Activated B cell treated with CpG ODN at 0.5 μM for 24 hours (primary cell): ENCODE measurements at regions of chr6 and their contacts with region 1.

Region 1: GRCh38 chr6:90274451-90275030 is 22.1 kb downstream of the BACH2 start:
- DNase-seq: peak; percentile 43
- ATAC-seq: peak; percentile 84
- H3K4me3 Mint-ChIP-seq: peak overlapping the region; percentile 64
- H3K27ac Mint-ChIP-seq: peak overlapping the region; percentile 85
- H3K4me1 Mint-ChIP-seq: peaks cover 93% of the 10 kb centered on the region
- H3K27me3 Mint-ChIP-seq: no peaks in the 10 kb centered on the region
- CTCF ChIP-seq: no peak

Region 2: GRCh38 chr6:89829591-89830385 is 444.8 kb before region 1 on chr6 and contains the start of gene CASP8AP2:
- CTCF ChIA-PET with region 1: no interaction called
- POLR2A ChIA-PET with region 1: no interaction called
- intact Hi-C with region 1: no loop called
- DNase-seq: peak; percentile 76
- ATAC-seq: peak; percentile 93
- H3K4me3 Mint-ChIP-seq: peak within 1 kb of the TSS; percentile 99
- H3K27ac Mint-ChIP-seq: peak within 1 kb of the TSS; percentile 96
- H3K4me1 Mint-ChIP-seq: peaks cover 37% of the 10 kb centered on the region
- H3K27me3 Mint-ChIP-seq: no peaks in the 10 kb centered on the region
- CTCF ChIP-seq: no peak
- total RNA-seq, gene CASP8AP2: 17.1 and 17.8 TPM in 2 replicates

Region 3: GRCh38 chr6:89970609-89971337 is 303.8 kb before region 1 on chr6:
- CTCF ChIA-PET with region 1: no interaction called
- POLR2A ChIA-PET with region 1: no interaction called
- intact Hi-C with region 1: loop called (anchors 5 kb)
- DNase-seq: no peak
- ATAC-seq: peak; percentile 61
- H3K4me3 Mint-ChIP-seq: no peak overlapping the region
- H3K27ac Mint-ChIP-seq: no peak overlapping the region
- H3K4me1 Mint-ChIP-seq: peaks cover 12% of the 10 kb centered on the region
- H3K27me3 Mint-ChIP-seq: no peaks in the 10 kb centered on the region
- CTCF ChIP-seq: no peak

Region 4: DNA sequence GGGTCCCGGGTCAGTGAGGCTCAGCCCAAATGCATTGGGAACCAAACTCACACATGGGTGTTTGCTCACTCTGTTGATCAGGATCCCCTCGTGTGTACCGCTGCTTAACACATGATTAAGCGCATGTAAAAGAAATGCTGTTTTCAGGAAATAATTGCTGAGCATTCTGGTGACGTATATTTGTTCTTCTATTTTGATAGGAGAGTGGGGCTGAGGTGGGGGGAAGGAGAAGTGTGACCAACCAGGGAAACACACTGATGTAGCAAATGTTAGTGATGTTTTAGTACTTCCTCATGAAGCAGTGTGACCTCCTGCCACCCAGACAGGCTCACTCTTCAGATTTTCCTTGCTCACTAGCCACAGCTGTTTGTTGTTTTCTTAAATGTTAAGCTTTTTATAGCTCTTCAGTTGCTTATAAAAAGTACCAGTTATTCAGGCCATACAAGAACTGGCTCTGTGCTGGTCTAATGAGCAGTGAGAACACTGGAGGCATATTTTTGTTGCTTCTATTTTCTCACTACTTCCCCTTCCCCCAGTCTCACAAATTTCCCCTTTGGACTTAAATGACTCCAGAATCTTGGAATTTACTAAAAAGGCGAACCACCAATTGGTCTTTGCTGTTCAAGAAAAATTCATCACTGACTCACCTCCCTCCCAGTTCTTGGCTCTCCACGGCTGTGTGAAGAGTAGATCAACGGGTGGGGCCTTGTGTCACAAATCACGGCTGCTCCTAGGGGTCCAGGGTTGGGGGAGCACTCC is 101.3 kb after region 1 on chr6:
- CTCF ChIA-PET with region 1: no interaction called
- POLR2A ChIA-PET with region 1: no interaction called
- intact Hi-C with region 1: no loop called
- DNase-seq: peak; percentile 43
- ATAC-seq: peak; percentile 95
- H3K4me3 Mint-ChIP-seq: peak overlapping the region; percentile 50
- H3K27ac Mint-ChIP-seq: peak overlapping the region; percentile 94
- H3K4me1 Mint-ChIP-seq: peaks cover 72% of the 10 kb centered on the region
- H3K27me3 Mint-ChIP-seq: no peaks in the 10 kb centered on the region
- CTCF ChIP-seq: no peak

Region 5: DNA sequence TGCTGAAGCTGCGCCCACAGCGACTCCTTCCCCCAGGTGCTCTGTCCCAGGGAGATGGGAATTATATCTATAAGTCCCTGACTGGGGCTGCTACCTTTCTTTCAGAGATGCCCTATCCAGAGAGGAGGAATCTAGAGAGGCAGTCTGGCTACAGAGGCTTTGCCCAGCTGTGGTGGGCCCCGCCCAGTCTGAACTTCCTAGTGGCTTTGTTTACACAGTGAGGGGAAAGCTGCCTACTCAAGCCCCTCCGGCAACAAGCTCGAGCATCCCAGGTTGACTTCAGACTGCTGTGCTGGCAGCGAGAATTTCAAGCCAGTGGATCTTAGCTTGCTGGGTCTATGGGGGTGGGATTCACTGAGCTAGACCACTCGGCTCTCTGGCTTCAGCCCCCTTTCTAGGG is 464.8 kb after region 1 on chr6:
- CTCF ChIA-PET with region 1: no interaction called
- POLR2A ChIA-PET with region 1: no interaction called
- intact Hi-C with region 1: no loop called
- DNase-seq: no peak
- ATAC-seq: no peak
- H3K4me3 Mint-ChIP-seq: no peak overlapping the region
- H3K27ac Mint-ChIP-seq: no peak overlapping the region
- H3K4me1 Mint-ChIP-seq: no peaks in the 10 kb centered on the region
- H3K27me3 Mint-ChIP-seq: peaks cover 5% of the 10 kb centered on the region
- CTCF ChIP-seq: no peak

Region 6: DNA sequence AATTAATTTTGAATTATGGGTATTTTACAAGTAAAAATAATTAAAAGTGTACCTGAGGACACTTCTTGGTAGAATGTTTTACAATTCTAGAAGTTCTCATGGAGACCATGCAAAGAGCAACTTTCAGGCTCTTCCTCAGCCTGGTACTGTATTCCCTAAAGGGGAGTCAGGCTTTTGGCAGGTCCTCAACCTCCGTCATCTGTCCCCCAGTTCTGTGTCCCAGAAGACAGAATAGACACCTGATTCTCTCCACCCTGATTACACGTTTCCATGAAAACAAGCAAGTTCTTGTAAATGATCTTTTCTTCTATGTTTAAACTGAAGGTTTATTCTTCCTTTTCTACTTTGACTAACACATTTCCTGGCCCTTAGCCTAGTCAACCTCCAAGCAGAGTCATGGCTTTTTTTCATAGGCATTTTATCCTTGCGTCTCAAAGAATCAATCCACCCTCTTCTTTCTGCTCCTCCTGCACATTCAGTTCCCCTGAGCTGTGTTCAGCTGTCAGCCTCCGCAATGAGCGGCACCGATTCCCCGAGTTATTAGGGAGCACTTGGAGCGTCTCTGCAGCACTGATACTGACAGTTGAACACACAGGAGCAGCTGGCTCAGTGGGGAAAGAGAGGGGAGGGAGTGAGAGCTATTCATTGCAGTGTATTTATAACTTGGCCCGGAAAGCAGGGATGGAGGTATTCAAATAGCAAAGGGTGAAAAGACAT is 1394.8 kb after region 1 on chr6:
- CTCF ChIA-PET with region 1: no interaction called
- POLR2A ChIA-PET with region 1: no interaction called
- intact Hi-C with region 1: no loop called
- DNase-seq: no peak
- ATAC-seq: no peak
- H3K4me3 Mint-ChIP-seq: no peak overlapping the region
- H3K27ac Mint-ChIP-seq: no peak overlapping the region
- H3K4me1 Mint-ChIP-seq: no peaks in the 10 kb centered on the region
- H3K27me3 Mint-ChIP-seq: no peaks in the 10 kb centered on the region
- CTCF ChIP-seq: no peak